ENCODE measurements at regions of chr10 and their contacts with region 1.

Region 1: DNA sequence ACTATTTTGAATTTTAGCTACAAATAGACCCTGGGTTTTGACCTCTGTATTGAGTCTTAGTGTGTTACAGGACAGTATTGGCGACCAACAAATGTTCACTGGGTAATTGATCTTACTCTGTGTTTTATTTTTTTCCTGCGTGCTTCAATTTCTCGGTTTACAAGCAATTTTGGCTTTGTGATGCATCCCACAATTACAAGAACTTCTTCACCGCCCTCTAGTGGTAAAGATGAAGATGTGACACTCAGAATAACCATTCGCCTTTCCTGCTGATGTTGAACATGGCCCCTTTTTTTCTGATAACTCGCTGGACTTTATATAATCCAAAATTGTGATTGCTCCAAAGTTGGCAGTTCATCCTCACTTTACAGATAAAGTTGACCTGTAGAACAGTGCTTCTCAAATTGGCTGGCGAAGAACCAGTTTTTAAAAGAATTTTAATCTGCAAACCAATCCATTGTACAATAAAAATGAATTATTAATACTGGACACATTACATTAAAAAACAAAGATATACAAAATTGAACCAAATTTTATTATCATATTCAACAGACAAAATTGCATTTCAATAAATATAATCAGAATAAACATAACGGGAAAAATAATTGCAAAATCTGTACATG is 20.2 kb upstream of the SMC3 start:
- DNase-seq: peak in 1 of 2 experiments; percentile 29
- H3K4me3 ChIP-seq: no peak overlapping the region
- H3K27ac ChIP-seq: no peak overlapping the region
- H3K4me1 ChIP-seq: no peaks in the 10 kb centered on the region
- H3K27me3 ChIP-seq: no peaks in the 10 kb centered on the region
- CTCF ChIP-seq: peak in 2 of 3 experiments; percentile 63 to 82; a peak in 3 of 4 replicates
- EP300 ChIP-seq: no peak
- POLR2A ChIP-seq: no peak
- RAD21 ChIP-seq: peak; percentile 82 to 85

Region 2: DNA sequence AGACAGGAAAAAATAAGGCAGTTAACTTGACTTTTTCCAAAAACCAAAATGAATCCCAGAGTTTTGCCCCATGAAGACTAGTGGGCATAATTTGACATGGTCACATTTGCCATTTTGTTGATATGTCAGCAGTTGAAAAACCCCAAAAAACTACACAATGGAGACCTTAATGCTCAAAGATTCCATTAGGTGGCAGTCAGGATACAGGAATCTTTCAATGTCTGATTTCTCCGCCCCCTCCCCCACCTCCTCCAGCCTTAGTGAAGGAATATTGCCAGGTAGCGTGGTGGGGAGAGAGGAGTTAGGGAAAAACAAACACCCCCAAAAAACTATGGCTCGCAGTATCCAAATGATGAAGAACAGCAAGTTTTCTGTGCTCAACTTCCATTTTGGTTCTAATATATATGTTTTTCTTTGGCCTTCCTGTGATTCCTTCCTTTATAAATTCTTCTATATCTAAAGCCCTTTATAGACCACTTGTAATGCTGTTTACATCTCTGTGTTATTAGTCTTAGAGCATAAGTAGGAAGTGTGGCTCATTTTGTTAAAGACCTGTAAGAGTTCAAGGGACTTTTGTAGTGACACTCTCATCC is 235.8 kb before region 1 on chr10:
- CTCF ChIA-PET with region 1: interaction called, 41 read pairs
- POLR2A ChIA-PET with region 1: interaction called, 4 read pairs
- DNase-seq: no peak
- H3K4me3 ChIP-seq: no peak overlapping the region
- H3K27ac ChIP-seq: no peak overlapping the region
- H3K4me1 ChIP-seq: no peaks in the 10 kb centered on the region; a peak in 1 of 7 replicates
- H3K27me3 ChIP-seq: no peaks in the 10 kb centered on the region
- CTCF ChIP-seq: peak in 2 of 3 experiments; percentile 66 to 74; a peak in 2 of 4 replicates
- EP300 ChIP-seq: no peak
- POLR2A ChIP-seq: no peak
- RAD21 ChIP-seq: peak; percentile 94 to 96

Region 3: GRCh38 chr10:110497438-110498086 is 49.7 kb before region 1 on chr10 and contains the start of gene DUSP5:
- CTCF ChIA-PET with region 1: interaction called, 20 read pairs
- POLR2A ChIA-PET with region 1: interaction called, 7 read pairs
- DNase-seq: peak; percentile 56 to 94
- H3K4me3 ChIP-seq: peak within 1 kb of the TSS; percentile 65 to 96 (median 80)
- H3K27ac ChIP-seq: peak within 1 kb of the TSS; percentile 62; the same call in 1 of the 2 replicates
- H3K4me1 ChIP-seq: peaks cover 12 to 33% (median 23%) of the 10 kb centered on the region in 4 experiments
- H3K27me3 ChIP-seq: peaks cover 0 to 34% (median 17%) of the 10 kb centered on the region in 4 experiments; a peak in 5 of 7 replicates
- CTCF ChIP-seq: no peak
- EP300 ChIP-seq: no peak
- POLR2A ChIP-seq: peak; percentile 84 to 94
- RAD21 ChIP-seq: no peak
- total RNA-seq, gene DUSP5: 27.0 and 30.3 TPM in 2 replicates

Region 4: DNA sequence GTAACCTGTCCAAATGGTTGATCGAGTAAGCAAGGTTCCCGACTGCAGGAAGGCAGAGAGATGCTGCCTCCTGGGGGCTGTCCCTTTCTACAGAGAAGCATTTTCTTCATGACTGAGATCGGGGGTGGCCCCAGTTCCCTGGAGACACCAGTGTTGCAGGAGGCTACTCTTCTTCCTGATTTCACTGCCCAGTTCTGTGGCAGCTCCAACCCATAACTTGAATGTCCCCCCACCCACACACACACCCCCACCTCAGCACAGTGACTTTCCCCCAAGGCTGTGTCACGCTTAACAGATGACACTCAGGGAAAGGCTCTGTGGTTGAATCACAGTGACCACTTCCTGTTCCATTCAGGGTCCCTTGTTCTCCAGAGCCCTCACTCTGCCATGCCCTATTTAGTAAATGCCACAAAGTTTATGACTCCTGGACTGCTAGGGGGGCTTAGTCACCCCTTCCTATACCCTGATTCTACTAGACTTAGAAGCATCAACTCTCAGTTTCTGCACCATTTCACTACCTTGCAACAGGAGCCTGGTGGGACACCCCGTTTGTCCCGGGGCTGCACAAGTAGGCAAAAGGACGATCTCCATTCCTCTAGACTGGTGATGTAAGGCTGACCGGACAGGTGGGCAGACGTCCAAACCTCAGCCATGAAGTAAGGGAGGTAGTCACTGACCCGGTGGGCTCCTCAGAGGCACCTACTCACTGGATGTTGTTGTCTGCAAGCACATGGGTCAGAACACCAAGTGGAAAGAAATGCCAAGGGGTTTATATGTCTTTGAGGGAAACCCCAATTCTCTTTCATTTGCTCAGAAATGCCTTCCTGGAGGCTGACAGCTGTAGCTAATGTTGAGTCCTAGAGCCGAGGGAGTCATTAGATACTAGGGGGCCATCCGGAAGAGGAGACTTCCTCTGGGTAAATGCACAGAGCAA is 11.0 kb before region 1 on chr10:
- CTCF ChIA-PET with region 1: interaction called, 25 read pairs
- POLR2A ChIA-PET with region 1: no interaction called
- DNase-seq: no peak
- H3K4me3 ChIP-seq: no peak overlapping the region
- H3K27ac ChIP-seq: no peak overlapping the region
- H3K4me1 ChIP-seq: peaks cover 0 to 3% (median 0%) of the 10 kb centered on the region in 4 experiments; a peak in 2 of 7 replicates
- H3K27me3 ChIP-seq: no peaks in the 10 kb centered on the region
- CTCF ChIP-seq: peak; percentile 36 to 55 (median 47)
- EP300 ChIP-seq: no peak
- POLR2A ChIP-seq: no peak
- RAD21 ChIP-seq: peak; percentile 80

Region 5: DNA sequence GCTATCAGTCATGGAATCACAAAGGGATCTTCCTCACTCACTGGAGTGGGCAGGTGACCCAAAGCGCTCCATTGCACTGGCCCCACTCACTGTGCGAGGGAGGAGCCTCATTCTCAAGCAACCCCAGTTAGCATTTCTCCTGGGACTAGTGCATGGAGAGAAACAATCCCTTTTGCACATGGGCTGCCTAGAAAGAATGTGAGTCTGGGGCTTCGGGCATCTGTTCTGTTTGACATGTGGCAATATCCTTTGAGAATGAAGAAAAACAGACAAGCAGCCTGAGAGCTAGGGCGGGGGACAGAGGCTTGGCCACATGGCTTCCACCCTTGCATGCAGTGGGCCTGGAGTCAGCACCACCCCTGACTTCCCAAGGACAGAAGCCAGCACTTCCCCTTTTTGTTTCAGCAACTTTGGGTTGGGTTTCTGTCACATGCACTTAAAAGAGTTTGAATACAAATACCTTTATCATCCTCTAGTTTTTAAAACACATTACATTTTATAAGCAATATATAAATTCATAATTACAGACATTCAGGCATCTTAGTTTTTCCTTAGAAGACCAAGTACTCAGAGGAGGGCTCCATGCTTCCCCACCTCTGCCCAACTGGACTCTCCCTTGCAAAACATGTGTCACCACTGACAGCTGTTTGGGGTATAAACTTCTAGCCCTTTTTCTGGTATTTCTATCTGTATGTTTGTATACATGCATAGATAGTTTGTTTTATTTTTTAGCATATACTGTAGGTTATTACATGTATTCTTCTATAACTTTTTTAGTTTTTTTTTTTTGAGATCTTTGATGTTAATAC is 170.7 kb after region 1 on chr10:
- CTCF ChIA-PET with region 1: no interaction called
- POLR2A ChIA-PET with region 1: no interaction called
- DNase-seq: no peak
- H3K4me3 ChIP-seq: no peak overlapping the region
- H3K27ac ChIP-seq: no peak overlapping the region
- H3K4me1 ChIP-seq: no peaks in the 10 kb centered on the region
- H3K27me3 ChIP-seq: no peaks in the 10 kb centered on the region
- CTCF ChIP-seq: no peak
- EP300 ChIP-seq: no peak
- POLR2A ChIP-seq: no peak
- RAD21 ChIP-seq: no peak

Measured in H1 (cell line).